ENCODE measurements at regions of chr12 and their contacts with region 1.

Region 1: GRCh38 chr12:104108755-104109445 is 29.1 kb downstream of the NFYB start:
- DNase-seq: peak; percentile 54 to 83 (median 62)
- ATAC-seq: peak; percentile 95
- H3K4me3 ChIP-seq: no peak overlapping the region
- H3K27ac ChIP-seq: no peak overlapping the region
- H3K4me1 ChIP-seq: no peaks in the 10 kb centered on the region
- H3K27me3 ChIP-seq: no peaks in the 10 kb centered on the region
- CTCF ChIP-seq: peak; percentile 84 to 88 (median 86)
- EP300 ChIP-seq: no peak
- POLR2A ChIP-seq: no peak
- RAD21 ChIP-seq: peak; percentile 91 to 95

Region 2: GRCh38 chr12:103771466-103771865 is 337.4 kb before region 1 on chr12:
- CTCF ChIA-PET with region 1: no interaction called
- POLR2A ChIA-PET with region 1: no interaction called
- in situ Hi-C with region 1: no loop called
- intact Hi-C with region 1: loop called (anchors 5 kb)
- DNase-seq: peak; percentile 32 to 51 (median 44)
- ATAC-seq: peak; percentile 94
- H3K4me3 ChIP-seq: no peak overlapping the region
- H3K27ac ChIP-seq: no peak overlapping the region
- H3K4me1 ChIP-seq: peaks cover 0 to 5% of the 10 kb centered on the region in 2 experiments; a peak in 1 of 5 replicates
- H3K27me3 ChIP-seq: no peaks in the 10 kb centered on the region
- CTCF ChIP-seq: peak; percentile 68 to 75 (median 75)
- EP300 ChIP-seq: no peak
- POLR2A ChIP-seq: 0 out of 2 replicates have a peak, but pooled peaks have one; percentile 22
- RAD21 ChIP-seq: peak; percentile 67 to 81

Region 3: DNA sequence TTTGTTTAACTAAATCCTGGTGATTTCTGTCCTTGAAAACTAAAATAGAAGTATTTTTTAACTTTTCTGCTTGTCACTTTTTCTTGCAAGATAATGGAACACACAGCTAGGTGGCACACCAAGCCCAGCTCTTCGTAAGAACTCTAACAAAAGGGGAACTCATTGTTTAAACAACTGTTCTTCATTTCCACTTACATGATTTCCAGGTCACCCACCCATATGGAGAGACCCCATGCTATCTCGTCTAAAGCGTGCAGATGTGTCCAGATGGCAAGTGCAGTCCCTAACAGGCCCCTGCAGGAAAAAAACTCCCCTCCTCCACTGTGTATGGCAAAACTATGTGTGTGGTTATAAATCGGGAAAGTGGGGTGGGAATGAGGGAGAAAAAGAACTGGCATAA is 224.6 kb before region 1 on chr12:
- CTCF ChIA-PET with region 1: interaction called, 9 read pairs
- POLR2A ChIA-PET with region 1: no interaction called
- in situ Hi-C with region 1: loop called (anchors 10 kb)
- intact Hi-C with region 1: loop called (anchors 1 kb)
- DNase-seq: peak in 3 of 4 experiments; percentile 24 to 30 (median 25)
- ATAC-seq: 0 out of 3 replicates have a peak, but pooled peaks have one; percentile 38
- H3K4me3 ChIP-seq: no peak overlapping the region
- H3K27ac ChIP-seq: no peak overlapping the region
- H3K4me1 ChIP-seq: no peaks in the 10 kb centered on the region
- H3K27me3 ChIP-seq: peaks cover 9 to 21% of the 10 kb centered on the region in 2 experiments; a peak in 3 of 5 replicates
- CTCF ChIP-seq: peak; percentile 18 to 70 (median 48); a peak in 3 of 6 replicates
- EP300 ChIP-seq: no peak
- POLR2A ChIP-seq: no peak
- RAD21 ChIP-seq: peak; percentile 73 to 75

Region 4: GRCh38 chr12:104057771-104058197 is 51.1 kb before region 1 on chr12:
- CTCF ChIA-PET with region 1: interaction called, 8 read pairs
- POLR2A ChIA-PET with region 1: no interaction called
- in situ Hi-C with region 1: no loop called
- intact Hi-C with region 1: loop called (anchors 1 kb)
- DNase-seq: peak; percentile 19 to 35 (median 28)
- ATAC-seq: peak; percentile 77
- H3K4me3 ChIP-seq: no peak overlapping the region
- H3K27ac ChIP-seq: no peak overlapping the region
- H3K4me1 ChIP-seq: no peaks in the 10 kb centered on the region
- H3K27me3 ChIP-seq: peaks cover 13 to 25% of the 10 kb centered on the region in 2 experiments; a peak in 4 of 5 replicates
- CTCF ChIP-seq: peak; percentile 63 to 81 (median 75)
- EP300 ChIP-seq: no peak
- POLR2A ChIP-seq: no peak
- RAD21 ChIP-seq: peak; percentile 50 to 78

Region 5: GRCh38 chr12:104166465-104166864 is 57.6 kb after region 1 on chr12:
- CTCF ChIA-PET with region 1: no interaction called
- POLR2A ChIA-PET with region 1: no interaction called
- in situ Hi-C with region 1: no loop called
- intact Hi-C with region 1: loop called (anchors 2 kb)
- DNase-seq: peak in 2 of 4 experiments; percentile 17 to 21
- ATAC-seq: peak; percentile 83
- H3K4me3 ChIP-seq: no peak overlapping the region
- H3K27ac ChIP-seq: no peak overlapping the region
- H3K4me1 ChIP-seq: peaks cover 0 to 4% of the 10 kb centered on the region in 2 experiments; a peak in 4 of 5 replicates
- H3K27me3 ChIP-seq: no peaks in the 10 kb centered on the region
- CTCF ChIP-seq: peak in 2 of 3 experiments; percentile 29 to 51; a peak in 2 of 6 replicates
- EP300 ChIP-seq: no peak
- POLR2A ChIP-seq: no peak
- RAD21 ChIP-seq: peak in 1 of 2 experiments; percentile 45; a peak in 1 of 4 replicates

Measured in K562 (cell line).